Natural killer cell (primary cell): ENCODE measurements at regions of chr1 and their contacts with region 1.

Region 1: DNA sequence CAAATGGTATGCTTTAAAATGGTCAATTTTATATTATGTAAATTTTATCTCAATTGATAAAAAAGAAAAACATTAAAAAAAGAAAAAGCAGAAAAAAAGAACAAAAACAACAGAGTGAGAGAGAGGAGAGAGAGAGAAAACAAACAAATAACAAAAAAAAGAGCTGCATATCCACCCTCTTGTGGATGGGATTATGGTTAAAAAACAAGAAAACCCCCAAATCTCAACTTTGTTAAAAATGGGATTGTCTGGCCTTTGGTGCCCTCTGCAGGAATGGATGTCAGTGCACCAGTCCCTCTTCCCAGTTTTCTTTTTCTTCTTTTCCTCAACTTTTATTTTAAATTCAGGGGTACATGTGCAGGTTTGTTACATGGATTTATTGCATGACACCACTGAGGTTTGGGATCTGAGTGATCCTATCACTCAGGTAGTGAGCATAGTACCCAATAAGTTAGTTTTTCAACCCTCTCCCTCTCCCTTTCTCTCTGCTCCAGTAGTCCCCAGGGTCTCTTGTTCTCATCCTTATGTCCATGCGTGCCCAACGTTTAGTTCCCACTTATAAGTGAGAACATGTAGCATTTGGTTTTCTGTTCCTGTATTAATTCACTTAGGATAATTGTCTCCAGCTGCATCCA is 28.1 kb downstream of the RNF187 start:
- DNase-seq: peak; percentile 20 to 75
- ATAC-seq: peak in 2 of 3 donors; percentile 69 to 74
- H3K4me3 ChIP-seq: no peak overlapping the region
- H3K4me3 Mint-ChIP-seq: no peak overlapping the region
- H3K27ac ChIP-seq: no peak overlapping the region
- H3K27ac Mint-ChIP-seq: no peak overlapping the region
- H3K4me1 ChIP-seq: peaks cover 7% of the 10 kb centered on the region
- H3K4me1 Mint-ChIP-seq: no peaks in the 10 kb centered on the region
- H3K27me3 ChIP-seq: peaks cover 10% of the 10 kb centered on the region
- H3K27me3 Mint-ChIP-seq: peaks cover 18 to 33% of the 10 kb centered on the region in 2 donors
- CTCF ChIP-seq: peak; percentile 82

Region 2: DNA sequence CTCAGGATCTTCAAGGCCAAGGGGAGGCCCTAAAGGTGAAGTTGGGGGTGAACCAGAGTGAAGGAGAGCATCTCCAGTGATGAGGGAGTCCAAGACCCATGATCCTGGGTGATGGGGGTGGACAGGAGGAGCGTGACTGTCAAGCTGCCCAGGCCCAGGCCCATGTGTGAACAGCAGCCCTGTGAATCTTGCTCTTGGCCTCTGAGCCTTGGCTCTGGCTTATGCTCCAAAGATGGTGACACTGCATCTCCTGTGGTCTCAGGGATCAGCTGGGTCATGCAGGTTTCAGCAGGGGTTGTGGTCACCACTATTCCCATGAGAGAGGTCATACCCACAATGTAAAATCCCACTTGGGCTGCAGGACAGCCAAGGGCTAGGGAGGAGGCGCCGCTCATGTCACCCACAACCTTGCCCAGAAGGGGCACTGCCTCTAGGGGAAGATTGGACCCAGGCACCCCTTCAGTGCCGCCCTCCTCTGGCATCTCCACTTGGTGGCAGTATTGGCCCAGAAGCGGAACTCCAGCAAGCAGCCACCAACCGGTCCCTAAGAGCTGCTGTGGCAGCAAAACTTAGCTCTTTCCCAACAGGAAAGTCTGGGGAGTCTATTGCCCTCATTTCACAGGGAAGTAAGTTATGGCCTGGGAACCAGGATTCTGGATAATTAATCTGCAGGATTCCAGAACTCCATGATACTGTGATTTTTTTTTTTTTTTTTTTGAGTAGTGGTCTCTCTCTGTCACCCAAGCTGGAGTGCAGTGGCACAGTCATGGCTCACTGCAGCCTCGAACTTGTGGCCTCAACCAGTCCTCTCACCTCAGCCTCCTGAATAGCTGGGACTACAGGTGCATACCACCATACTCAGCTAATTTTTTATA is 516.0 kb before region 1 on chr1:
- intact Hi-C with region 1: loop called (anchors 2 kb)
- DNase-seq: peak; percentile 50 to 80
- ATAC-seq: peak; percentile 84 to 97 (median 95)
- H3K4me3 ChIP-seq: no peak overlapping the region
- H3K4me3 Mint-ChIP-seq: no peak overlapping the region
- H3K27ac ChIP-seq: no peak overlapping the region
- H3K27ac Mint-ChIP-seq: no peak overlapping the region
- H3K4me1 ChIP-seq: peaks cover 2% of the 10 kb centered on the region
- H3K4me1 Mint-ChIP-seq: no peaks in the 10 kb centered on the region
- H3K27me3 ChIP-seq: peaks cover 7% of the 10 kb centered on the region
- H3K27me3 Mint-ChIP-seq: peaks cover 21 to 41% of the 10 kb centered on the region in 2 donors
- CTCF ChIP-seq: peak; percentile 67

Region 3: DNA sequence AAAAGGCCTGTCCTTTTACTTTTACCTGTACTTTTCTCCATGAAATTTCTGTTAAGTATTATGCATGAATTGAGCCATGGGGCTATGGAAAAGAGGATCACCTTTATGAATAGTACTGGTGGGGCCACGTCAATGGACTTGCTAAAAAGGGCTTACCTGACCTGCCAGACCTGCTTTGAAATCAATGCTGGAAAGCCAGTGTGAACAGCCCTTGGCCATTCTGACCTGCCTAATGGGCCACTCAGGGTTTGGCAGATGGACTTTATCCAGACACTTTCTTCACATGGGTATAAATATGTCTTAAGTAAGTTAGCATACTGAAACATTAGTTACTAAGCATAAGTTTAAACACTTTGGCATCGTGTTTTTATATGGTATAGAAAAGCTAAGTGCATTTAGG is 383.6 kb before region 1 on chr1:
- intact Hi-C with region 1: loop called (anchors 1 kb)
- DNase-seq: no peak
- ATAC-seq: no peak
- H3K4me3 ChIP-seq: no peak overlapping the region
- H3K4me3 Mint-ChIP-seq: no peak overlapping the region
- H3K27ac ChIP-seq: no peak overlapping the region
- H3K27ac Mint-ChIP-seq: no peak overlapping the region
- H3K4me1 ChIP-seq: peaks cover 7% of the 10 kb centered on the region
- H3K4me1 Mint-ChIP-seq: peaks cover 0 to 5% of the 10 kb centered on the region in 2 donors
- H3K27me3 ChIP-seq: no peaks in the 10 kb centered on the region
- H3K27me3 Mint-ChIP-seq: peaks cover 0 to 9% of the 10 kb centered on the region in 2 donors
- CTCF ChIP-seq: no peak

Region 4: GRCh38 chr1:228212966-228213844 is 302.1 kb before region 1 on chr1:
- intact Hi-C with region 1: loop called (anchors 2 kb)
- DNase-seq: peak; percentile 75 to 94
- ATAC-seq: peak; percentile 93 to 97 (median 97)
- H3K4me3 ChIP-seq: peak overlapping the region; percentile 54
- H3K4me3 Mint-ChIP-seq: peak overlapping the region; percentile 90
- H3K27ac ChIP-seq: no peak overlapping the region
- H3K27ac Mint-ChIP-seq: peak overlapping the region; percentile 72 to 74
- H3K4me1 ChIP-seq: peaks cover 19% of the 10 kb centered on the region
- H3K4me1 Mint-ChIP-seq: peaks cover 0 to 7% of the 10 kb centered on the region in 2 donors
- H3K27me3 ChIP-seq: no peaks in the 10 kb centered on the region
- H3K27me3 Mint-ChIP-seq: no peaks in the 10 kb centered on the region
- CTCF ChIP-seq: peak; percentile 38

Region 5: DNA sequence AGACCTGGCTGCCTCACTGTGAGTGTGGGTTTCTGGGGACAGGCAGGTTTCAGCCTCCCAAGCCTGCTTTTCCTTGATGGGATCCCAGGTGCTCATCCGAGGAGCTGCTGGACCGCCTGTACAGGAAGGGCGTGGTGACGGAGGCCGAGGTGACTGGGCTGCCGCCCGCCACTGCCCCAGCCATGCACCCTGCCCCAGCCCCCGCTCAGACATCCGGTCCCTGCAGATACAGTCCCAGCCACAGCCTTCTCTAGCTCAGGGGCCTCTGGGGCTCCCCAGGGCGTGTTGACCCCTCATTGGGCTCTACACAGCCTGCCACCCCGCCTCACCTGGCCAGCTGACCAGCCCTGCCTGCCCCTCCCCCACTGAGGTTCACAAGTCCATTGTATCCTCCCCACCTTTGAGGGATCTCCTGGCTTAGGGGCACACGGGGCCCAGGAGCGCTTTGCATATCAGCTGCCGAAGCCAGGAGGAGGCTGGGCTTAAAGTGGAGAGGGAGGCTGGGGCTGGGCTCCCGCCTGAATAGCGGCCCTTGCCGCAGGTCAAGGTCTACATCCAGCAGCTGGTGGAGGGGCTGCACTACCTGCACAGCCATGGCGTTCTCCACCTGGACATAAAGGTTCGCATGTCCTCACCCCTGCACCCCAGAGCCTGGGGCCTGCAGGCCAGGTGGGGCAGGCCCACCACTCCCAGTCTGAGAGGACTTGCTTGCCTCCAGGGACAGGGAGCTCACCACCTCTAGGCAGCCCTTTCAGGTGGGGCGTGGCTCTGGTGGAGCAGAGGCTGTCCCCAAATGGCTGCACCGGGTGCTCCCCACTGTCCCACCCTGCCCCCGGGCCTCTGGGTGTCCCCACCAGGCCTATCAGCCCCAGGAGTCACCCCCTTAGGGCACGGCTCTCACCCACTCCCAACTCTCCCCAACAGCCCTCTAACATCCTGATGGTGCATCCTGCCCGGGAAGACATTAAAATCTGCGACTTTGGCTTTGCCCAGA is 147.2 kb before region 1 on chr1:
- intact Hi-C with region 1: no loop called
- DNase-seq: no peak
- ATAC-seq: no peak
- H3K4me3 ChIP-seq: no peak overlapping the region
- H3K4me3 Mint-ChIP-seq: no peak overlapping the region
- H3K27ac ChIP-seq: no peak overlapping the region
- H3K27ac Mint-ChIP-seq: no peak overlapping the region
- H3K4me1 ChIP-seq: peaks cover 5% of the 10 kb centered on the region
- H3K4me1 Mint-ChIP-seq: no peaks in the 10 kb centered on the region
- H3K27me3 ChIP-seq: no peaks in the 10 kb centered on the region
- H3K27me3 Mint-ChIP-seq: no peaks in the 10 kb centered on the region
- CTCF ChIP-seq: no peak

Region 6: GRCh38 chr1:228490120-228491078 is 24.9 kb before region 1 on chr1:
- intact Hi-C with region 1: no loop called
- DNase-seq: no peak
- ATAC-seq: no peak
- H3K4me3 ChIP-seq: no peak overlapping the region
- H3K4me3 Mint-ChIP-seq: peak overlapping the region; percentile 9
- H3K27ac ChIP-seq: no peak overlapping the region
- H3K27ac Mint-ChIP-seq: peak overlapping the region; percentile 53 to 75
- H3K4me1 ChIP-seq: peaks cover 26% of the 10 kb centered on the region
- H3K4me1 Mint-ChIP-seq: peaks cover 16 to 50% of the 10 kb centered on the region in 2 donors
- H3K27me3 ChIP-seq: no peaks in the 10 kb centered on the region
- H3K27me3 Mint-ChIP-seq: no peaks in the 10 kb centered on the region
- CTCF ChIP-seq: no peak

Region 7: DNA sequence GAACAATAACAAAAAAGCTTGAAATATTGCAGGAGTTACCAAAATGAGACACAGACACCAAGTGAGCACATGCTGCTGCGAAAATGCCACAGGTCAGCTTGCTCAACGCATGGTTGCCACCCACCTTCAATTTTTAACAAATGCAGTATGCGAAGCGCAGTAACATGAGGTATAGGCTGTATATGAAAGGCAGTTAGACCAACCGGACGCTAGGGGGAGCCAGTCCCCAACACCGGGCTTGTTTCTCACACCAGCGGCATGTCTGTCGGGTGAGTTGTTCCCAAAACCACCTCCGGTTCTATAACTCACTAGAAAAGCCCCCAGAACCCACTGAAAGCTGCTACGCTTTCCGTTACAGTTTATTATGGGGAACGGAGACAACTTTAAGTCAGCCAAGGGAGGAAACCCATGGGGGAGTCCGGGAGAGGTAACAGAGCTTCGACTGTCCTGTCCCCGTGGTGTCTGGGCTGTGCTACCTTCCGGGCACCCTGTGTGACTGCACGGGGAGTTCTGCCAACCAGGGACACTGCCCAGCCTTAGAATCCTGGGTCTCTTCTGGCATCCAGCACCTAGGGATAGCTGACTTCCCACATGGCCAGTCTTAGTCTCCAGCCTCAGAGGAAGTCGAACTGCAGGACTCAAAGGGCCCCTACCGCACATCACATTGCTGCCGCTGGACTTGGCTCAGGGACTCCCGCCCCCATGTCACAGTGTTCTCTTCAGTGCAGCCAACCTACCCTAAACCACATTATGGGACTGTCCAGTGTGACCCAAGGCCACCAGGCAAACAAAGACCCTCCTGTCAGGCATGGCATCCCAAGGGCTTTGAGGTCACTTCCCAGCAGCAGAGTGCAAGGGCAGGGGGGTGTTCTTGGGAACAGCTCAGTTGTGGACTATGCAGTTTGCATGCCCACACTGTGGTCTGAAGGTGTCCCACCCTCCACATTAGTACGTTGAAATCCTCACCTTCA is 14.1 kb before region 1 on chr1:
- intact Hi-C with region 1: loop called (anchors 1 kb)
- DNase-seq: peak; percentile 86 to 96
- ATAC-seq: peak; percentile 97 to 98 (median 98)
- H3K4me3 ChIP-seq: peak overlapping the region; percentile 36
- H3K4me3 Mint-ChIP-seq: peak overlapping the region; percentile 82
- H3K27ac ChIP-seq: peak overlapping the region; percentile 55
- H3K27ac Mint-ChIP-seq: peak overlapping the region; percentile 77 to 83
- H3K4me1 ChIP-seq: peaks cover 18% of the 10 kb centered on the region
- H3K4me1 Mint-ChIP-seq: peaks cover 16 to 35% of the 10 kb centered on the region in 2 donors
- H3K27me3 ChIP-seq: no peaks in the 10 kb centered on the region
- H3K27me3 Mint-ChIP-seq: no peaks in the 10 kb centered on the region
- CTCF ChIP-seq: peak; percentile 96